ENCODE measurements at regions of chr9 and their contacts with region 1.

Region 1: DNA sequence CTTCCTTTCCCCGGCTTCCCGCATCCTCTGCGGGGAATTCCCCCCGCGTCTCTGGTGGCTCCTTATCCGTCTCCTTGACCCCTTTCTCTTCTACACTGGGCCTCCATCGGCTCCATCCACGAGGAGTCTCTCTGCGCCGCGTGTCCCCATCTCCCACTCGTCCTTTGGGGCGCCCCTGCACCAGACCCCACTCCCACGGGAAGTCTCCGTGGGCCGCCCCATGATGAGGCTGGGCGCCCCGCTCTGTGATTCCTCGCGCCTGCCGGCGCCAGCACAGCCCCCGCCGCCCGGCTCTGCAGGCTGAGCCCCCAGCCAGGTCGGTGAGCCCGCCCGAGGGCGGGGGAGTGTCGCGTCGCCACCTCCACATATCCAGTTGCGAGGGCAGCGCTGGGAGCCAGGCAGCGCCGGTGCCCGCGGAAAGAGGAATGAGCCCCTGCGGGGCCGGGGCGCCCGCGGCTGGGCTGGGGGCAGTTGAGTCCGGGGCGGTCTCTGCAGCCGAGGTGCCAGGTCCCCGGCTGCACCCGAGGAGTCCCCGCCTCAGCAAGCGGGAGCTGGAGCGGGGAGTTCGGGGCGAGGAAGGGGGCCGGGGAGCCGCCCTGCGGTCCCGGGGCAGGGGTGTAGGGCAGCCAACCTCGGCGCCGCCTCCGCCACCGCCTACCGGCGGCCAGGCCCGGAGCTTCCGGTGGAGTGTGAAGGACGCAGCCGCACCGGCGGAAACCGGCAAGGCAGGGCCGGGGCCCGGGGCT is 2.1 kb upstream of the TRAF1 start:
- DNase-seq: peak; percentile 81 to 85 (median 84)
- ATAC-seq: peak; percentile 91
- H3K4me3 ChIP-seq: peak overlapping the region; percentile 71 to 73
- H3K27ac ChIP-seq: peak overlapping the region; percentile 49 to 93 (median 80)
- H3K4me1 ChIP-seq: peaks cover 13% of the 10 kb centered on the region
- H3K27me3 ChIP-seq: no peaks in the 10 kb centered on the region
- CTCF ChIP-seq: peak in 4 of 7 experiments; percentile 13 to 46 (median 39)
- POLR2A ChIP-seq: peak; percentile 78 to 87 (median 80)

Region 2: DNA sequence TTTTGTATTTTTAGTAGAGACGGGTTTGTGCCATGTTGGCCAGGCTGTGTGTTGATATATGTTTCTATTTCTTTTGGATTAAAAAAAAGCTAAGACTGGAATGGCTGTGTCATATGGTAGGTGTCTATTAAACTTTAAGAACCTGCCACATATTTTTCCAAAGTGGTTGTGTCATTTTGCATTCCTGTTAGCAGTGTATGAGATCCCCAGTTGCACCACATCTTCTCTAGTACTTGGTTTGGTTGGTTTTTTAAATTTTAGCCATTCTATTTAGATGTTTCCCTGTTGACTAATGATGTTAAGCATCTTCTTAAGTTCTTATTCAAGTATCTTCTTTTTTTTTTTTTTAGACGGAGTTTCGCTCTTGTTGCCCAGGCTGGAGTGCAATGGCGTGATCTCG is 178.2 kb before region 1 on chr9:
- intact Hi-C with region 1: loop called (anchors 5 kb)
- DNase-seq: no peak
- ATAC-seq: no peak
- H3K4me3 ChIP-seq: no peak overlapping the region
- H3K27ac ChIP-seq: no peak overlapping the region
- H3K4me1 ChIP-seq: no peaks in the 10 kb centered on the region
- H3K27me3 ChIP-seq: no peaks in the 10 kb centered on the region
- CTCF ChIP-seq: no peak
- POLR2A ChIP-seq: no peak

Region 3: GRCh38 chr9:120875954-120876841 is 52.5 kb before region 1 on chr9:
- intact Hi-C with region 1: loop called (anchors 5 kb)
- DNase-seq: peak; percentile 60 to 78 (median 70)
- ATAC-seq: peak; percentile 71
- H3K4me3 ChIP-seq: peak overlapping the region; percentile 51 to 55
- H3K27ac ChIP-seq: peak overlapping the region; percentile 42 to 80 (median 60)
- H3K4me1 ChIP-seq: peaks cover 19% of the 10 kb centered on the region
- H3K27me3 ChIP-seq: no peaks in the 10 kb centered on the region
- CTCF ChIP-seq: peak in 2 of 7 experiments; percentile 3 to 10
- POLR2A ChIP-seq: peak in 1 of 3 donors; percentile 25